Endothelial cell of umbilical vein (primary cell): ENCODE measurements at regions of chr2 and their contacts with region 1.

Region 1: DNA sequence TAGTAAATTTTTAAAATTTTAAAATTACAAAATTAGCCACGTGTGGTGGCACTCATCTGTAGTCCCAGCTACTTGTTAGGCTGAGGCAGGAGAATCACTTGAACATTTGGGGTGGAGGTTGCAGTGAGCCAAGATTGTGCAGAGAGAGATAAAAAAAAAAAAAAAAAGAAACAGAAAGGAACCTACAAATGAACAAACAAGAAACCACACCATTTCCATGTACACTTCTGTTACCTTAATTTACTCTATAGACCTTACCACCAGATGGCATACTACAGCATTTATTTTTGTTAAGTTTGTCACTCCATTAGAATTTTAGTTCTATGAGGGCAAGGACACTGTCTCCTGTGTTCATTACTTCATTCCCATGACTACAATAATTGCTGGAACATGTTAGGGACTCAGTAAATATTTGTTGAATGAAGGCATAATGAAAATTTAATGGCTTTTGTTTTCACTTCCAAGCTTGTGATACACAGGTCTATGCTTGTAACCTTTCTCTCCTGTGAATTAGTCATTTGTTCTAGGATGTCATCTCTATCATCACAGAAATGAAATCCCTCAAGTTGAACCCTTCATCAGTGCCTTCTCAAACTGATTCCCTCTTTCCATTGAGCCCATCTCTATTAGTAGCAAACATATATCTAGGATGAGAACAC is 76.0 kb downstream of the ARHGAP15 start:
- DNase-seq: peak; percentile 4
- H3K4me3 ChIP-seq: no peak overlapping the region
- H3K27ac ChIP-seq: no peak overlapping the region
- H3K4me1 ChIP-seq: no peaks in the 10 kb centered on the region
- H3K27me3 ChIP-seq: peaks cover 0 to 2% of the 10 kb centered on the region in 2 experiments
- CTCF ChIP-seq: peak in 1 of 2 donors; percentile 4
- POLR2A ChIP-seq: no peak

Region 2: GRCh38 chr2:143193121-143193520 is 12.1 kb before region 1 on chr2:
- CTCF ChIA-PET with region 1: interaction called, 11 read pairs
- POLR2A ChIA-PET with region 1: no interaction called
- dilution Hi-C with region 1: no loop called
- intact Hi-C with region 1: no loop called
- DNase-seq: no peak
- H3K4me3 ChIP-seq: no peak overlapping the region
- H3K27ac ChIP-seq: no peak overlapping the region
- H3K4me1 ChIP-seq: no peaks in the 10 kb centered on the region
- H3K27me3 ChIP-seq: no peaks in the 10 kb centered on the region
- CTCF ChIP-seq: no peak
- POLR2A ChIP-seq: no peak

Region 3: DNA sequence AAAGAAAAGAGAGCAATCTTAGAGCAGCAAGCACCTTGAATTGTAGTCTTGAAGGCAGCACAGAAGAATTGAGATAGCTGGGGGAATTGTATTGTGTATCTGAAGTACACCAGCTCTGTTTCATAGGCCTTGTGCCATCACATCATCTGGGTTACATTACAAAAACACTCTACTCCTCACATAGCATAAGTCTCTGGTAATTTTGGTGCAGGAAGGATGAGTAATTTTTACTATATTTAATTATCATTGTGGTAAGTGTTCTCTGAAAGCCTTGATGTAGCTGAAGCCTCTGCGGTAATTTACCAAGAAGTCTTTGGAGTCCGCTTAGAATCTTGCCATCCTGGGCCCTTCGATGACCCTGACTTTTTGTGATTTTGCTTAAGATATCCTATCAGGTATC is 215.1 kb after region 1 on chr2:
- CTCF ChIA-PET with region 1: no interaction called
- POLR2A ChIA-PET with region 1: no interaction called
- dilution Hi-C with region 1: no loop called
- intact Hi-C with region 1: no loop called
- DNase-seq: no peak
- H3K4me3 ChIP-seq: no peak overlapping the region
- H3K27ac ChIP-seq: no peak overlapping the region
- H3K4me1 ChIP-seq: no peaks in the 10 kb centered on the region
- H3K27me3 ChIP-seq: no peaks in the 10 kb centered on the region
- CTCF ChIP-seq: no peak
- POLR2A ChIP-seq: no peak